ENCODE measurements at regions of chr2 and their contacts with region 1.

Region 1: GRCh38 chr2:21256006-21256405 is 132.2 kb downstream of the TDRD15 start:
- DNase-seq: peak; percentile 24 to 93 (median 77)
- H3K4me3 ChIP-seq: peak overlapping the region in 1 of 59 donors; percentile 10
- H3K27ac ChIP-seq: peak overlapping the region; percentile 73 to 100 (median 98)
- H3K27me3 ChIP-seq: no peaks in the 10 kb centered on the region
- CTCF ChIP-seq: peak in 4 of 56 donors; percentile 11 to 24 (median 14)

Region 2: GRCh38 chr2:21194858-21195271 is 61.1 kb before region 1 on chr2:
- intact Hi-C with region 1: loop called (anchors 5 kb)
- DNase-seq: no peak
- H3K4me3 ChIP-seq: no peak overlapping the region
- H3K27ac ChIP-seq: peak overlapping the region in 27 of 59 donors; percentile 1 to 79 (median 53)
- H3K27me3 ChIP-seq: no peaks in the 10 kb centered on the region
- CTCF ChIP-seq: no peak

Region 3: GRCh38 chr2:21381421-21381820 is 125.4 kb after region 1 on chr2:
- intact Hi-C with region 1: loop called (anchors 5 to 10 kb)
- DNase-seq: peak in 1 of 10 donors; percentile 20
- H3K4me3 ChIP-seq: peak overlapping the region in 3 of 59 donors; percentile 0 to 9 (median 4)
- H3K27ac ChIP-seq: peak overlapping the region in 40 of 59 donors; percentile 1 to 91 (median 66)
- H3K27me3 ChIP-seq: peaks cover 0 to 7% (median 0%) of the 10 kb centered on the region in 45 donors
- CTCF ChIP-seq: peak in 2 of 56 donors; percentile 3 to 12

Region 4: GRCh38 chr2:21395366-21395765 is 139.4 kb after region 1 on chr2:
- intact Hi-C with region 1: no loop called
- DNase-seq: peak in 6 of 10 donors; percentile 19 to 58 (median 48)
- H3K4me3 ChIP-seq: no peak overlapping the region
- H3K27ac ChIP-seq: no peak overlapping the region
- H3K27me3 ChIP-seq: peaks cover 0 to 10% (median 0%) of the 10 kb centered on the region in 45 donors
- CTCF ChIP-seq: peak in 54 of 56 donors; percentile 19 to 80 (median 56)

Measured in dorsolateral prefrontal cortex (tissue), 120 donors.